Activated CD4-positive, alpha-beta memory T cell treated with anti-CD3 and anti-CD28 coated beads, Interleukin-2, amount 10 ng/mL, durations not matched to agents 7 days and 5 days (primary cell): ENCODE measurements at regions of chr2 and their contacts with region 1.

Region 1: GRCh38 chr2:227324995-227325838 is at the start of gene MFF:
- DNase-seq: peak; percentile 94
- H3K4me3 Mint-ChIP-seq: peak within 1 kb of the TSS; percentile 85
- H3K27ac Mint-ChIP-seq: peak within 1 kb of the TSS; percentile 79
- H3K4me1 Mint-ChIP-seq: peaks cover 49% of the 10 kb centered on the region
- H3K27me3 Mint-ChIP-seq: peaks cover 2% of the 10 kb centered on the region
- total RNA-seq, gene MFF: 63.9 to 67.5 TPM

Region 2: GRCh38 chr2:227293531-227293930 is 31.7 kb before region 1 on chr2:
- CTCF ChIA-PET with region 1: no interaction called
- POLR2A ChIA-PET with region 1: no interaction called
- DNase-seq: no peak
- H3K4me3 Mint-ChIP-seq: no peak overlapping the region
- H3K27ac Mint-ChIP-seq: no peak overlapping the region
- H3K4me1 Mint-ChIP-seq: peaks cover 5% of the 10 kb centered on the region
- H3K27me3 Mint-ChIP-seq: no peaks in the 10 kb centered on the region

Region 3: GRCh38 chr2:227335713-227336112 is 10.5 kb after region 1 on chr2:
- CTCF ChIA-PET with region 1: interaction called, 5 read pairs
- POLR2A ChIA-PET with region 1: interaction called, 12 read pairs
- DNase-seq: no peak
- H3K4me3 Mint-ChIP-seq: no peak overlapping the region
- H3K27ac Mint-ChIP-seq: no peak overlapping the region
- H3K4me1 Mint-ChIP-seq: peaks cover 26% of the 10 kb centered on the region
- H3K27me3 Mint-ChIP-seq: no peaks in the 10 kb centered on the region